Psoas muscle (tissue), 8 donors: ENCODE measurements at regions of chr18 and their contacts with region 1.

Region 1: GRCh38 chr18:76492669-76493212 is 2.3 kb downstream of the ZNF516 start:
- DNase-seq: peak; percentile 100
- ATAC-seq: peak; percentile 86 to 90 (median 88)
- H3K4me3 ChIP-seq: peak overlapping the region; percentile 92
- H3K27ac ChIP-seq: peak overlapping the region; percentile 91
- H3K4me1 ChIP-seq: peaks cover 21% of the 10 kb centered on the region
- H3K27me3 ChIP-seq: no peaks in the 10 kb centered on the region
- CTCF ChIP-seq: no peak

Region 2: DNA sequence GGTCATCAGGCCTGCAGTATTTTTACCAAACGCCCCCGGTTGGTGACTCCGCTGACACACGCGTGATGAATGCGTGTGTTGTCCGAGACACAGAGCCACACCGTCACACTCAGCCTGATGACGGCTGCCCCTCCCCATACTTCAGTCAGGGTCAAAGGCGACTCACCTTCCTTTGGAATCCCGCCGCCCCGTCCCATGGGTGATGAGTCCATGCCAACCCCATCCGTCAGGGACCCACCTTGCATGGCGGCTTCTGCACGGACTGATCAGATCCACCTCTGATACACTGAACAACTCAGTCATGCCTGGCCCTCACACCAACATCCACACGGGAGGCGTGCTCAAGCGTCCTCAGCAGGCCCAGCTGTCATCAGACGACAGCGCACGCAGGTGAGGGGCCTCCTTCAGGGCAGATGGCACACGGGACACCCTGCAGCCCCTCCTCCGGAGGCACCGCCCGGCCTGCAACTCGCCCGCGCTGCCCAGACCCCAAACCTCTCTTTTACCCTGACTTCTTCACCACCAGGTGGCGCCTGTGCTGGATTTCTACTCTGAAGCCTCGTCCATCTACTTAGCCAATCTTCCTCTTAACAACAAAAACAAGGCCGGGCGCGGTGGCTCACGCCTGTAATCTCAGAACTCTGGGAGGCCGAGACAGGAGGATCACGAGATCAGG is 86.9 kb before region 1 on chr18:
- intact Hi-C with region 1: loop called in 1 of 2 experiments (anchors 5 kb)
- DNase-seq: peak; percentile 64 to 81
- ATAC-seq: peak; percentile 58 to 84 (median 67)
- H3K4me3 ChIP-seq: no peak overlapping the region
- H3K27ac ChIP-seq: no peak overlapping the region
- H3K4me1 ChIP-seq: peaks cover 10% of the 10 kb centered on the region
- H3K27me3 ChIP-seq: no peaks in the 10 kb centered on the region
- CTCF ChIP-seq: peak; percentile 62

Region 3: GRCh38 chr18:76450452-76451395 is 42.0 kb before region 1 on chr18:
- intact Hi-C with region 1: loop called (anchors 1 to 5 kb)
- DNase-seq: peak; percentile 77 to 89
- ATAC-seq: peak; percentile 65 to 86 (median 76)
- H3K4me3 ChIP-seq: peak overlapping the region; percentile 73
- H3K27ac ChIP-seq: peak overlapping the region; percentile 93
- H3K4me1 ChIP-seq: peaks cover 68% of the 10 kb centered on the region
- H3K27me3 ChIP-seq: no peaks in the 10 kb centered on the region
- CTCF ChIP-seq: no peak

Region 4: DNA sequence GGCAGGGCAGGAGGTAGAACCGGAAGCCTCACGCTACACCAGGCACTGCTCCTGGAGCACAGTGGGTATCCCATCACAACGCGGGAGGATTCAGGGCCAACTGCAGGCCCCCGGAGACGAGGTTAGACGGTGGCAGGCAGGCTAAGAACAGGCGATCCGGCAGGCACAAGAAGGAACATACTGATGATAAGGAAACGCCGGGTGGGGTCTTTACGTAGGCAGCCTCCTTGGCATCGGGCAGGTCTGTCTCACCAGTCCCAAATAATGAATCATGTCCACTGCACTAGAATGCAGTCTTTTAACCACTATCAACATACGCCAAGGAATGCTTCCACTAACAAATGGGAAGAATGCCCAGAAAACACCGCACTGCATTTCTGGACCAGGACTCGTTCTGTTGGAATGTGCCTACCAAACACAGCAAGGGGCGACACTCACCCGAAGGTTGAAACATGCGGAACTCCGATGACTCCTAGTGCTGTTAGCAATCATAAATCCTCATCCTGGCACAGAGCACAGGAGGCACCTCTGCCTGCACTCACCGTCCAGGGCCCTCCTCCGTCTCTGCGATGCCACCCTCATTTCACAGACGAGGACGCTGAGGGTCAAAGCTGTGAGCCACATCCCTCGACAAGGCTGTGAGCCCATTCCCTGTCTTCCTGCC is 32.9 kb before region 1 on chr18:
- intact Hi-C with region 1: loop called in 1 of 2 experiments (anchors 5 kb)
- DNase-seq: peak; percentile 59 to 77
- ATAC-seq: peak; percentile 80 to 85 (median 82)
- H3K4me3 ChIP-seq: peak overlapping the region; percentile 49
- H3K27ac ChIP-seq: peak overlapping the region; percentile 90
- H3K4me1 ChIP-seq: peaks cover 46% of the 10 kb centered on the region
- H3K27me3 ChIP-seq: no peaks in the 10 kb centered on the region
- CTCF ChIP-seq: no peak

Region 5: DNA sequence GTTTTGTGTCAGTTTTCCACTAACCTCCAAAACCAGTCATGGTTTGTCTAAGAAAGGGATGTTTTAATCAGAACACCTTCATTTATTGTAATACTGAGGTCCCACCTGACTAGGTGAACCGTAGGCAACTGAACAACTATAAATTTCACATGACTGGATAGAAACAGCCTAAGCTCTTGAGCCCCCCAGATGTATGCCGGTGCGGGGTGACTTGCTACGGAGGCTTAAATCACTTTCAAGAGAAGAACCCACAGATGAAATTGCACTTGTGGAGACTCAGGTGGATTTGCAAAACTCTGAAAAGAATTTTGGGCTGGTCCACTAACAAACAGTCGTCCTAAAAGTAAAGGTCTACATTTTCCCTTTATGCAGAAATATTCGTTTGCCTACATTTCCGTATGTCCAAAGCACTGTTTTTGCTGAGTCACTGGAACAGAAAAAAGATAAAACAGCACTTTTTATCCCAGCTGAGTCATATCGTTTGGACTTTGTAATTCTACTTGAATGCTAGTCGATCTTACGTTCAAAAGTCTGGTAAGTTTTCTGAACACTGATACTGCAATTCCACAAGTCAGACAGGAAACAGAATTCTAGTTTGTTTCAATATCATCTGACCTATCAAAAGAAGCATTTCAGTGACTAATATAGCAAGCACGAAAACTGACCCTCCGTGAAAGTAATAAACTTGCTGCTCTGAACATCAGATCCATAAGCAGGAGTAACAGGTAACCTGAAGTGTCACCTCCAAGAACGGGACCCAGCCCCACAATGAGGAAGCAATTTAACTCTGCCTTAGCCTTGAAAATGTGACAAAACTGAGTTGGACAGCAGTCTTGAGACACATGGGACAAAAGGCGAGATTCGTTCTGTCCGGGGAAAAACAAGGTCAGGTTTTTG is 15.8 kb before region 1 on chr18:
- intact Hi-C with region 1: loop called in 1 of 2 experiments (anchors 2 kb)
- DNase-seq: no peak
- ATAC-seq: peak; percentile 20 to 49 (median 26)
- H3K4me3 ChIP-seq: peak overlapping the region; percentile 60
- H3K27ac ChIP-seq: peak overlapping the region; percentile 72
- H3K4me1 ChIP-seq: peaks cover 49% of the 10 kb centered on the region
- H3K27me3 ChIP-seq: no peaks in the 10 kb centered on the region
- CTCF ChIP-seq: no peak

Region 6: DNA sequence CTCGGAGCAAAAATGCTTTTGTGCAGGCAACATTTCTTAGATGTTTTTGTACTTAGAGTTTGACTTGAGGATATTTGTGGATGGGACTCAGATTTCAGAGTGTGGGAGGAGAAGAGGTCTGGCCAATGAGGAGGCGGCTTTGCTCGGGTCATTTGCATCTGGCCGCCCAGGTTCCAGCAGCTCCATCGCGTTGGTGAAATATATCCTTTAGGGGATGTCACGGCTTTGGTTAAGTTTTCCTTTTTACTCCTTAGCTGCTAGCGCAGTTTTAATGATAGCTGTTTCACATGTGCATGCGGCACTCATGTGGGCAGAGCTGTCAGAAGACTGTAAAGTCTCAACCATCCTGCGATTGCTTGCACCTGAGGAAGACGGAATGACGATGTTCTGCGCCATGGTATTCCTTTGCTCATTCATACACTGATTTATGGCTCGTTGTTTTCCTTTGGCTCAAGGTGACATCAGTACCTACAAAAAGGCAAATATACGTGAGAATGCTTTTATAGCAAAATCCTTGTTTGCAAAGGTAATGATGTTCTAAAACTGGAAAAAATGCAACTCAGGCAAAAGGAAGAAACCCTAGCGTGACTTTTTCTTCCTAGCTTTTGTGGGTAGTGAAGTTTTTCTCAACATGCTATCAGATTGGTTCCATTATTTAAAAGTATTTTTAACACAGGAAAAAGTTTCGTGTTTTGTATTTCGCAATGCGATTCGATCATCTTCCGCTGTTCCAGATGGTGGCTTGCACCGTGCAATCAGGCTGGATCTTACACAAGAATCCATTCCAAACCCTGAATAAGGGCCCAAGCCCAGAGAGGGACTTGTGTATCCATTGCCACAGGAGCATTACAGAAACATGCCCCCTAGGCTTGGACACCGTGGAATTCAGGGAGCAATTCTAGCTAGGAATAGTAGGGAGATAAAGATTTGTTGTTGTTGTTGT is 72.8 kb after region 1 on chr18:
- intact Hi-C with region 1: loop called in 1 of 2 experiments (anchors 2 kb)
- DNase-seq: peak; percentile 70 to 79
- ATAC-seq: peak; percentile 79 to 97 (median 93)
- H3K4me3 ChIP-seq: peak overlapping the region; percentile 56
- H3K27ac ChIP-seq: peak overlapping the region; percentile 72
- H3K4me1 ChIP-seq: no peaks in the 10 kb centered on the region
- H3K27me3 ChIP-seq: no peaks in the 10 kb centered on the region
- CTCF ChIP-seq: no peak

Region 7: GRCh38 chr18:76620321-76621170 is 127.8 kb after region 1 on chr18:
- intact Hi-C with region 1: loop called in 1 of 2 experiments (anchors 10 kb)
- DNase-seq: peak; percentile 76 to 82
- ATAC-seq: peak; percentile 81 to 94 (median 84)
- H3K4me3 ChIP-seq: peak overlapping the region; percentile 61
- H3K27ac ChIP-seq: no peak overlapping the region
- H3K4me1 ChIP-seq: peaks cover 4% of the 10 kb centered on the region
- H3K27me3 ChIP-seq: peaks cover 0 to 2% (median 0%) of the 10 kb centered on the region in 3 donors
- CTCF ChIP-seq: peak; percentile 57